ENCODE measurements at regions of chr11 and their contacts with region 1.

Region 1: GRCh38 chr11:131737357-131737756 is 366.9 kb downstream of the NTM start:
- DNase-seq: no peak
- H3K4me3 Mint-ChIP-seq: no peak overlapping the region
- H3K27ac Mint-ChIP-seq: no peak overlapping the region
- H3K4me1 Mint-ChIP-seq: no peaks in the 10 kb centered on the region
- H3K27me3 Mint-ChIP-seq: no peaks in the 10 kb centered on the region
- CTCF ChIP-seq: no peak

Region 2: DNA sequence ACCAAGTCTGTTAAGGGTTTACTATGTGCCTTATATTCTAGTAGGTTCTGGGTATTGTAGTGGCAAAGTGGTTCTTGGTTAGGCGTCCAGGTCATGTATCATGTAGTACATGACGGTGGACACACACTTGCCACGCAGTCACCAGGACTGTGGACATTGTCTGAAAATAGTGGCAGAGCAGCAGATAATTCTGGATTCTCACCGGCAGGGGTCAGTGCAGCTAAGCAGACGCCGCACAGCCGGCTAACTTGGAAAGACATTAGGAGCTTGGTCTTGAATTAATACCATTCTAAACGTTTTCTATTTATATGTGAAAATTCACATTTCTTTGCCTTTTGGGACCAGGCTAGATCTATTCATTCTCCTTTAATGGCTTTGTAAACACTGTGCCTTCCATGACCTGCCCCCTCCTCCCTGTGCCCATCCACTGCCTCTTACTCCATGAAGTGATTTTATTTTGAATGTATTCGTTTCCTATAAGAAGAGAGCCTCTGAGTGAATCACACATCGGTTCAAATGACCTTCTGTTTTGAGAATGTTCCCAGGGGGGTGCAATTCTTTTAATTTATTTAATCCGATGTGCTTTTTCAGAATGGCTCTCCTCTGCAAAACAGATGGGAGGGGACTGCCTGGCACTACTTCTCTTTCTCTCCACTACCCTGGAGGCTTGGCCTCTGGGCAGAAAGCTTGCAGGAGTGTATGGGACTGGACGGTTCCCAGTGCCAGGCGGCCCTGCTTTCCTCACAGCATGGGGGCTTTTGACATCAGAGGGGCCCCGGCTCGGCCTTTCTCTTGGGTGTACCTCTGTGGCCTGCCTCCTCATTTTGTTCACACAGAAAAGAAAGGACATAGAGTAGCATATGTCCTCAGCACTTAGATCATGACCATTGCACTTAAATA is 11.0 kb after region 1 on chr11:
- CTCF ChIA-PET with region 1: interaction called, 11 read pairs
- POLR2A ChIA-PET with region 1: no interaction called
- intact Hi-C with region 1: no loop called
- DNase-seq: peak; percentile 5
- H3K4me3 Mint-ChIP-seq: no peak overlapping the region
- H3K27ac Mint-ChIP-seq: no peak overlapping the region
- H3K4me1 Mint-ChIP-seq: no peaks in the 10 kb centered on the region
- H3K27me3 Mint-ChIP-seq: no peaks in the 10 kb centered on the region
- CTCF ChIP-seq: peak; percentile 23

Region 3: DNA sequence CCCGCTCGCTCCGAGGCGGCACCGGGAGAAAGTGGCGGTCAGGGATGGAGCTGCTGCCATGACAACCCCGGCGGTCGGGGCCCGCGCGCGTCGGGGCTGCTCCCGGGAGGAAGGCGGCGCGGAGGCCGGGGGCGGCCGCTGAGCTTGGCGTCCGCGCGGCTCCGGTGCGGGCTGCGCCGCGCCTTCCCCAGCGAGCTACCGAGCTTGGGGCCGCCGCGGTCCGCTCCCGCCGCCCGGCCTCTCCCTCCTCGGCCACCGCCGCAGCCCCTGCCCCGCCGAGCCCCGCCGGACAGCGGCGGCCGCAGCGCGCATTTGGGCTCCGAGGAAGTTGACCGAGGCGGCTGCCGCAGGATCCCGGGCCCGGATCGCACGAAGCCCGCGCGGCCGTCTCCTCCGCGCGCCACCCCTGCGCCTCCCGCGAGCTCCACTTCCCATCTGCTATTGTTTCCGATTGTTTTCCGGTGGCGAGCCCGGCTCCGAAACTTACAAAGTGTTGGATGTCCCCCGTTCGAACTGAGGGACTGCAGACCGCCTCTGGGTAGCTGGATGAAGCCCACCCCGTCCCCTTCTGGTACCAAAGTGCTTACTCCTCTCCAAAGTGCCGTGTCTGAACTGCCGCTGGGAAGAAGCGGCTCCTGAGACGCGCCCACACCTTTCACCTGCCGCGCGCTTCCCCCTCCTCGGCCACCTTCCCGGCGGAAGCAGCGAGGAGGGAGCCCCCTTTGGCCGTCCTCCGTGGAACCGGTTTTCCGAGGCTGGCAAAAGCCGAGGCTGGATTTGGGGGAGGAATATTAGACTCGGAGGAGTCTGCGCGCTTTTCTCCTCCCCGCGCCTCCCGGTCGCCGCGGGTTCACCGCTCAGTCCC is 173.4 kb after region 1 on chr11:
- CTCF ChIA-PET with region 1: no interaction called
- POLR2A ChIA-PET with region 1: no interaction called
- intact Hi-C with region 1: no loop called
- DNase-seq: no peak
- H3K4me3 Mint-ChIP-seq: no peak overlapping the region
- H3K27ac Mint-ChIP-seq: no peak overlapping the region
- H3K4me1 Mint-ChIP-seq: no peaks in the 10 kb centered on the region
- H3K27me3 Mint-ChIP-seq: no peaks in the 10 kb centered on the region
- CTCF ChIP-seq: no peak

Region 4: GRCh38 chr11:132050577-132051180 is 313.3 kb after region 1 on chr11:
- CTCF ChIA-PET with region 1: no interaction called
- POLR2A ChIA-PET with region 1: no interaction called
- intact Hi-C with region 1: no loop called
- DNase-seq: no peak
- H3K4me3 Mint-ChIP-seq: no peak overlapping the region
- H3K27ac Mint-ChIP-seq: no peak overlapping the region
- H3K4me1 Mint-ChIP-seq: no peaks in the 10 kb centered on the region
- H3K27me3 Mint-ChIP-seq: no peaks in the 10 kb centered on the region
- CTCF ChIP-seq: no peak